Natural killer cell (primary cell): ENCODE measurements at regions of chr5 and their contacts with region 1.

Region 1: DNA sequence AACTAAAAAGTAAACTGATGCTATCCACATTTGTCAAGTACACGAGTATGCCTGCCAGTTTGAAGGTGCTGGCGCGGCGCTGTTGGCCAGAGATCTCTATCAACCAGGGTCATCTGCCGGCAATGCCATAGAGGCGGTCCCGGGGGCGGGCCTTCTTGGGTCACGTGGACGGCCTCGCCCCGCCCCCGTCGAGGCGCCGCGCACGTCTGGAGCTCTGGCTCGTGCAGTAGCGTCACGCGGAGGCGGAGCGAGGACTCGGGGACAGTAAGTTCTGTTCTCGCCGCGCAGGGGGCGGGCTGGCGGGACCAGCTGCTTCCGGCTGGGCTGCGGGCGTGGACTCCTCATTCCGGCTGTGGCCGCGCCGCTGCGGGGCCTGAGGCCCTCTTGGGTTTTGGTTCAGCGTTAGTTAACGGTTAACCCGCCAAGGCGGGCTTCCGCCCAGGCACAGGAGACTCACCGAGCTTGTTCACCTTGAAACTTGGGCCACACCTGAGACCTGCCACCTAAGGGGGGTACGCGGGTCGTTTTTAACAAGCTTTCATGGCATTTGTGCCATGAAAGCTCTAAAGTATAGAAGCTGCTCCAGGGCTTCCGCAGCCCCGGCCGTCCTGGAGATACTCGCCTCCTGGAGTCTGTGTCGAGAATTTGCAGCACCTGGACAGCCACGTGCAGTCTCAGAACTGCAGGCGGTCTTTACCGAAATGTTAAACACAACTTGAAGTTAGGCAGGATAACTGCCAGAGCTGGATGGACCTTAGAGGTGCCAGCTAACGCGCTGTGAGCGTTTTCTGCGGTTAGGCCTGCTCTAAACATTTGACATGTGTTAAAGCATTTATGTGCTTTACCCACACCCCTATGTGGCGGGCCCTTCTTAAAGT is at the start of gene RFESD:
- DNase-seq: peak; percentile 96 to 98
- ATAC-seq: peak; percentile 95 to 99 (median 96)
- H3K4me3 ChIP-seq: peak within 1 kb of the TSS; percentile 76
- H3K4me3 Mint-ChIP-seq: peak within 1 kb of the TSS; percentile 83
- H3K27ac ChIP-seq: peak within 1 kb of the TSS; percentile 91
- H3K27ac Mint-ChIP-seq: peak within 1 kb of the TSS; percentile 85 to 95
- H3K4me1 ChIP-seq: peaks cover 15% of the 10 kb centered on the region
- H3K4me1 Mint-ChIP-seq: peaks cover 8 to 16% of the 10 kb centered on the region in 2 donors
- H3K27me3 ChIP-seq: no peaks in the 10 kb centered on the region
- H3K27me3 Mint-ChIP-seq: no peaks in the 10 kb centered on the region
- CTCF ChIP-seq: no peak
- total RNA-seq, gene RFESD: 0.96 to 1.5 (median 1.4) TPM

Region 2: GRCh38 chr5:95554647-95555548 is 91.9 kb before region 1 on chr5 and contains the starts of genes ARSK and SKIC3:
- intact Hi-C with region 1: loop called (anchors 1 kb)
- DNase-seq: peak; percentile 81 to 99
- ATAC-seq: peak; percentile 85 to 96 (median 88)
- H3K4me3 ChIP-seq: peak within 1 kb of the TSS; percentile 97
- H3K4me3 Mint-ChIP-seq: peak within 1 kb of the TSS; percentile 98
- H3K27ac ChIP-seq: peak within 1 kb of the TSS; percentile 78
- H3K27ac Mint-ChIP-seq: peak within 1 kb of the TSS; percentile 92 to 94
- H3K4me1 ChIP-seq: peaks cover 13% of the 10 kb centered on the region
- H3K4me1 Mint-ChIP-seq: peaks cover 35 to 44% of the 10 kb centered on the region in 2 donors
- H3K27me3 ChIP-seq: no peaks in the 10 kb centered on the region
- H3K27me3 Mint-ChIP-seq: no peaks in the 10 kb centered on the region
- CTCF ChIP-seq: no peak
- total RNA-seq, gene ARSK: 2.8 to 5.8 (median 3.5) TPM
- total RNA-seq, gene SKIC3: 67.5 to 94.1 (median 71.1) TPM

Region 3: GRCh38 chr5:95730730-95731570 is 84.2 kb after region 1 on chr5 and contains the start of gene RHOBTB3:
- intact Hi-C with region 1: loop called (anchors 2 kb)
- DNase-seq: peak; percentile 55 to 59
- ATAC-seq: peak; percentile 82 to 87 (median 84)
- H3K4me3 ChIP-seq: peak within 1 kb of the TSS; percentile 77
- H3K4me3 Mint-ChIP-seq: peak within 1 kb of the TSS; percentile 94
- H3K27ac ChIP-seq: peak within 1 kb of the TSS; percentile 49
- H3K27ac Mint-ChIP-seq: peak within 1 kb of the TSS; percentile 83 to 92
- H3K4me1 ChIP-seq: peaks cover 8% of the 10 kb centered on the region
- H3K4me1 Mint-ChIP-seq: peaks cover 54 to 72% of the 10 kb centered on the region in 2 donors
- H3K27me3 ChIP-seq: no peaks in the 10 kb centered on the region
- H3K27me3 Mint-ChIP-seq: no peaks in the 10 kb centered on the region
- CTCF ChIP-seq: no peak
- total RNA-seq, gene RHOBTB3: 46.5 to 55.1 (median 46.5) TPM

Region 4: GRCh38 chr5:95822542-95823181 is 175.9 kb after region 1 on chr5 and contains the start of gene GLRX:
- intact Hi-C with region 1: loop called (anchors 5 kb)
- DNase-seq: peak in 1 of 2 donors; percentile 75
- ATAC-seq: peak; percentile 22 to 40 (median 37)
- H3K4me3 ChIP-seq: peak within 1 kb of the TSS; percentile 76
- H3K4me3 Mint-ChIP-seq: peak within 1 kb of the TSS; percentile 99
- H3K27ac ChIP-seq: peak within 1 kb of the TSS; percentile 86
- H3K27ac Mint-ChIP-seq: peak within 1 kb of the TSS; percentile 81 to 92
- H3K4me1 ChIP-seq: peaks cover 64% of the 10 kb centered on the region
- H3K4me1 Mint-ChIP-seq: peaks cover 75 to 77% of the 10 kb centered on the region in 2 donors
- H3K27me3 ChIP-seq: no peaks in the 10 kb centered on the region
- H3K27me3 Mint-ChIP-seq: no peaks in the 10 kb centered on the region
- CTCF ChIP-seq: no peak
- total RNA-seq, gene GLRX: 59.2 to 102 (median 62.5) TPM

Region 5: DNA sequence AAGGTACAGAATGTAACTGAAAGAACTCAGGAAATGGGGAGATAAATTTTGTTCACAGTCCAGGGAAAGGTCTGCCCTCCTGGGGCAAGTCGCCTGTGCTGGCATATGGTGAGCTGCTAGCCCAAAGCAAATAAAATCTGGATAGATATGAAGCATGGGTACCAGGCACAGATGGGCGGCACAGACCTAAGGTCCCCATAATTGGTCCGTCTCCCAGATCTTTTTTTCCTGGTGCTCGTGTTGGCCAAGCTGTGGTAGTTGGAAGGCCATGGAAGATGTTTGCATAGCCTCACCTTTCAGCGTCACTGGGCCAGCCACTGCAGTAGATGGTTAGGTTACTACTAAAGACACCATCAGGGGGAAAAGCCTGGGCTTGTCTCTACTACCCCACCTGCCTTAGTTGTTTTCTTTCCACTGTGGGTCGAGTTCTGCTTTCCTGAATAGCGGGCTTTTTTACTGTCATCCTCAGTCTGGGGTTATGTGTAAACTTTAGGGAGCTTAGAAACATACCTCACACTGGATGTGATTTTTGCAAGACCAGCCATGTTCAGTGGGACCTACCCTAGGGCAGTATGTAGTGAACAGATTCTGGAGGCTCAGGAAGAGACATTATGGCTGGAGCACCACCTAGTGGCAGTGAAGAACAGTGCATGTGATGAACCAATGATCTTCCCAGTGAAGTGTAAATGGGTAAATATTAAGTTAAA is 199.9 kb after region 1 on chr5:
- intact Hi-C with region 1: loop called (anchors 5 kb)
- DNase-seq: peak; percentile 60 to 87
- ATAC-seq: peak; percentile 85 to 87 (median 87)
- H3K4me3 ChIP-seq: no peak overlapping the region
- H3K4me3 Mint-ChIP-seq: no peak overlapping the region
- H3K27ac ChIP-seq: no peak overlapping the region
- H3K27ac Mint-ChIP-seq: no peak overlapping the region
- H3K4me1 ChIP-seq: peaks cover 12% of the 10 kb centered on the region
- H3K4me1 Mint-ChIP-seq: peaks cover 16 to 19% of the 10 kb centered on the region in 2 donors
- H3K27me3 ChIP-seq: no peaks in the 10 kb centered on the region
- H3K27me3 Mint-ChIP-seq: peaks cover 0 to 2% of the 10 kb centered on the region in 2 donors
- CTCF ChIP-seq: peak; percentile 92

Region 6: DNA sequence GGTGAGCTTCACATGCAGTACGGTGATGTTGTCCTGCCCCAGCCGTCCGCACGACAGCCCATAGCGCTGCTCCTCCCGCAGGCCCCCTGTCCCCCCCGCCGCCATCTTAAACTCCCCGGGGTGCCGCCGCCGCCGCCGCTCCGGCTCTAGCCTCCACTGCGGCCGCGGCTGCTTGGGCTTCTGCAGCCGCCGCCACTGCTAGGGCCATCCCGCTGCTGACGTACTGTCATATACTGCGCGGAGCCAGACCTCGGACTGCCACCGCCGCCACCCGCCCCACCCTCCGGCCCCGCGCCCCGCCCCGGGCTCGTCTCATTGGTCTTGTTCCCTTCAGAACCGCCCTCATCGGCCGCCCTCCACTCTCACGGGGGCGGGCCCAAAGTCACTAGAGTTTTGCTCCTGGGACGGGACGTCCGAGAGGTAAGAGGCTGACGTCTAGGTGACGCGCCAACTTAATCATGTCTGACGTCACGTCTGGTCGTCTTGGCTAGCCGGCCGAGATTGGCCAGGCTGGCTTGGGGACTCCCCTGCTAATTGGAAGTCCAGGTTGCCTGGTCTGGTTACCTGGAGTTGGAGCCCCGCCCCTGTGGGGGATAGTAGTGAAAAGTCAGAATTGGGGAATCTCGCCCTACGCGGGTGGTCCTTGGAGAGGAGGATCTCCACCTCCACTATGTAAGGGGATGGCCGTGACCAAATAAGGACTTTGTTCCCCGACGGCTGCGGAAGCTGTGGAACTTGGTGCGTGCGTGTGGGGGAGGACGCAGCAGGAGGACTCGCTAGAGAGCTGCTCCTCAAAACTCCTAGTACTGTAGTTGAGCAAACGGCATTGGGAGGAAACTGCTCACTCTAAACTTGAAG is 315.1 kb after region 1 on chr5 and contains the start of gene ELL2:
- intact Hi-C with region 1: loop called (anchors 5 kb)
- DNase-seq: peak; percentile 93 to 98
- ATAC-seq: peak; percentile 83 to 94 (median 85)
- H3K4me3 ChIP-seq: peak within 1 kb of the TSS; percentile 96
- H3K4me3 Mint-ChIP-seq: peak within 1 kb of the TSS; percentile 95
- H3K27ac ChIP-seq: peak within 1 kb of the TSS; percentile 96
- H3K27ac Mint-ChIP-seq: peak within 1 kb of the TSS; percentile 99
- H3K4me1 ChIP-seq: peaks cover 30% of the 10 kb centered on the region
- H3K4me1 Mint-ChIP-seq: peaks cover 31 to 32% of the 10 kb centered on the region in 2 donors
- H3K27me3 ChIP-seq: no peaks in the 10 kb centered on the region
- H3K27me3 Mint-ChIP-seq: peaks cover 14 to 16% of the 10 kb centered on the region in 2 donors
- CTCF ChIP-seq: no peak
- total RNA-seq, gene ELL2: 52.8 to 78.2 (median 69.4) TPM